Cardiac septum (tissue), 1 donor: ENCODE measurements at regions of chr1 and their contacts with region 1.

Region 1: GRCh38 chr1:205827623-205828022 is 14.6 kb upstream of the SLC41A1 start:
- DNase-seq: no peak

Region 2: DNA sequence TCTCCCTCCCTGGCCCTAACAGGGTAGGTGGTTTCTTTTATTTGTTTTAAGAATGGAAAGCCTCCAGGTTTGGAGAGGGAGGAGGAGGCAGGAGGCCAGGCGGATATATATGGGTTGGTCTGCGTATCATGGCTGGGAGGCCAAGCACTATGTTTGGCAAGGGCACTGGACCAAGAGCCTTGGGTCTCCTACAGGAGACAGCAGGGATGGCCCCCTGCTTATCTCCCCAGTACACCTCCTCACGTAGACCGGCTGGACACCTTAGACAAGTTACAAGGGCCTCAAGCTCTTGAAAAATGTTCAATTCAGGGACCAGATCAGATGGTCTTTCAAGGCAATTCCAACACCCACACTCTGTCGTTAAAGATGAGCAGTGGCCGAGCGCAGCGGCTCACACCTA is 25.6 kb before region 1 on chr1:
- intact Hi-C with region 1: loop called (anchors 2 kb)
- DNase-seq: no peak